CD8-positive, alpha-beta T cell (primary cell): ENCODE measurements at regions of chr12 and their contacts with region 1.

Region 1: DNA sequence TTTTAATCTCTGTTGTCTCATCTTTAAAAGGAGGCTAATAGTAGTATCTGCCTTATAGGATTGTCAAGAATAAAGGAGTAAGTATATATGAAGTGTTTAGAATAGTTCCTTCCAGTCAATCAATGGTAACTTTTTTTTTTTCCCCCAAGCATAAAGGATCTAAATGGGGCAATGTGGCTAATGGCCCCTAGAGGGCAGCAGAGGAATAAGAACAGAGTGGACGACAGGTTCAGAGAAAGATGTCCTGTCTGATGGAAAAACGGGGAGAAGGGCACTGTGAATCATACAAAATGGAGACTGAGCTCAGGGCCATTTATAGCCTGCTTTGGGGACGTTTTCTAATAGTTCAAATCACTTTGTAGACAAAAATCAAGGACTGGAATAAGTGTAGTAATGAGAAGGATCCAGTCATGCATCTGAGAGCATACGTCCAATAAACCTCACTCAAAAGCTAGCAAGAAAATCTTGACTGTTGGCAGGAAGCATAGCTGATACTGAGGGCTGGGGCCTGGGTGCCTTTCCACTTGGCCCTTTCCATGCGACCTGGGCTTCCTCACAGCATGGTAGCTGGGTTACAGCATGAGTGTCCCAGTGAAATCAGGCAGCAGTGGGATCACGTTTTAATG is 51.3 kb downstream of the IFNG-AS1 start:
- DNase-seq: peak; percentile 15 to 85 (median 65)
- ATAC-seq: peak; percentile 79
- H3K4me3 ChIP-seq: no peak overlapping the region
- H3K4me3 Mint-ChIP-seq: no peak overlapping the region
- H3K27ac ChIP-seq: no peak overlapping the region
- H3K27ac Mint-ChIP-seq: no peak overlapping the region
- H3K4me1 ChIP-seq: no peaks in the 10 kb centered on the region
- H3K4me1 Mint-ChIP-seq: peaks cover 25% of the 10 kb centered on the region
- H3K27me3 ChIP-seq: no peaks in the 10 kb centered on the region
- H3K27me3 Mint-ChIP-seq: no peaks in the 10 kb centered on the region
- CTCF ChIP-seq: peak; percentile 89

Region 2: DNA sequence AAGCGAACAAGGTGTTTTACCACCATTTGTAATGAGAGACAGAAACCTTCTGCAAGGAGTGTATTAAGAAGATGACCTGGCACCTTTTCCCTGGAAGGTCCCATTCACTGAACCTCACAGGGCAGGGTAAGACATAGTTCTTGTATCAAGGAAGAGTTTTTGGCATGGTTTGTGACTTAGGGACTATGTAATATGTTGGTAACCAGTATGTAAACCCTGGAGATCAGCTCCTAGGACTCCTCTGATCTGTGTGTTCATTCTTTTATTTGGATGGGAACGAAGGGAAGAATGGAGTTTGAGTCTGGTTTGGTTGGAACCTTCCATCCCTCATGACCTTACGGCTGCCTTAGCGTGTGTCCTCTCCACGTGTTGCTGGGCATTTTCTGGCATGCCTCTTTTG is 596.0 kb before region 1 on chr12:
- CTCF ChIA-PET with region 1: no interaction called
- POLR2A ChIA-PET with region 1: no interaction called
- intact Hi-C with region 1: no loop called
- DNase-seq: no peak
- ATAC-seq: no peak
- H3K4me3 ChIP-seq: no peak overlapping the region
- H3K4me3 Mint-ChIP-seq: no peak overlapping the region
- H3K27ac ChIP-seq: no peak overlapping the region
- H3K27ac Mint-ChIP-seq: no peak overlapping the region
- H3K4me1 ChIP-seq: peaks cover 21% of the 10 kb centered on the region
- H3K4me1 Mint-ChIP-seq: peaks cover 37% of the 10 kb centered on the region
- H3K27me3 ChIP-seq: no peaks in the 10 kb centered on the region
- H3K27me3 Mint-ChIP-seq: no peaks in the 10 kb centered on the region
- CTCF ChIP-seq: no peak

Region 3: DNA sequence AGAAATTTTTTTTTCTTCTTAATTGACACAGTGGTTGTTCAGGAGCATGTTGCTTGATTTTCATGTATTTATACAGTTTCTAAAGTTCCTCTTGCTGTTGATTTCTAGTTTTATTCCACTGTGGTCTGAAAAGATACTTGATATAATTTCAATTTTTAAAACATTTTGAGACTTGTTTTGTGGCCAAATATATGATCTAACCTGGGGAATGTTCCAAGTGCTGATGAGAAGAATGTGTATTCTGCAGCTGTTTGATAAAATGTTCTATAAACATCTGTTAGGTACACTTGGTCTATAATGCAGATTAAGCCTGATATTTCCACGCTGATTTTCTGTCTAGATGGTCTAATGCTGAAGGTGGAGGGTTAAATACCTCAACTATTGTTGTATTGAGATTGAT is 202.7 kb before region 1 on chr12:
- CTCF ChIA-PET with region 1: no interaction called
- POLR2A ChIA-PET with region 1: no interaction called
- intact Hi-C with region 1: no loop called
- DNase-seq: no peak
- ATAC-seq: no peak
- H3K4me3 ChIP-seq: no peak overlapping the region
- H3K4me3 Mint-ChIP-seq: no peak overlapping the region
- H3K27ac ChIP-seq: no peak overlapping the region
- H3K27ac Mint-ChIP-seq: no peak overlapping the region
- H3K4me1 ChIP-seq: no peaks in the 10 kb centered on the region
- H3K4me1 Mint-ChIP-seq: no peaks in the 10 kb centered on the region
- H3K27me3 ChIP-seq: no peaks in the 10 kb centered on the region
- H3K27me3 Mint-ChIP-seq: no peaks in the 10 kb centered on the region
- CTCF ChIP-seq: no peak

Region 4: DNA sequence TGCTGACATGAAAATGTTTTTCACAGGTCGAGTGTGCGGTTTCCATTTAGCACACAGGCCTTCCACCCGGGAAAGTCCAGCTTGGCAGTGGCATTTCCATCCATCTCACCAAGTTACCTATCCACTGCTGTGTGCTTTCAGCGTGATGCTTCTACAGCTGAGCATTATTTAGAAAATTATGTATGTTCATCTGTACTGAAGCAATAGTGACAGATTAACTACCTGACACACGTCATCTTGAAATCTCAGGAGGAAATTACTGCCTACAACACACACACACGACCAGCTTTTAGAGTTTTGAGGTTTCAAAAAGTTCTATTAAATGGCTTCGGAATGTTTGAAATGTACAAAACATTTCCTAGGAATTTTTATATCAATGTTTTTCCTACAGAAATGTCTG is 11.9 kb before region 1 on chr12:
- CTCF ChIA-PET with region 1: interaction called, 14 read pairs
- POLR2A ChIA-PET with region 1: interaction called, 5 read pairs
- intact Hi-C with region 1: no loop called
- DNase-seq: peak in 2 of 9 experiments; percentile 28 to 47
- ATAC-seq: no peak
- H3K4me3 ChIP-seq: no peak overlapping the region
- H3K4me3 Mint-ChIP-seq: no peak overlapping the region
- H3K27ac ChIP-seq: no peak overlapping the region
- H3K27ac Mint-ChIP-seq: no peak overlapping the region
- H3K4me1 ChIP-seq: peaks cover 13% of the 10 kb centered on the region
- H3K4me1 Mint-ChIP-seq: peaks cover 22% of the 10 kb centered on the region
- H3K27me3 ChIP-seq: no peaks in the 10 kb centered on the region
- H3K27me3 Mint-ChIP-seq: no peaks in the 10 kb centered on the region
- CTCF ChIP-seq: no peak

Region 5: DNA sequence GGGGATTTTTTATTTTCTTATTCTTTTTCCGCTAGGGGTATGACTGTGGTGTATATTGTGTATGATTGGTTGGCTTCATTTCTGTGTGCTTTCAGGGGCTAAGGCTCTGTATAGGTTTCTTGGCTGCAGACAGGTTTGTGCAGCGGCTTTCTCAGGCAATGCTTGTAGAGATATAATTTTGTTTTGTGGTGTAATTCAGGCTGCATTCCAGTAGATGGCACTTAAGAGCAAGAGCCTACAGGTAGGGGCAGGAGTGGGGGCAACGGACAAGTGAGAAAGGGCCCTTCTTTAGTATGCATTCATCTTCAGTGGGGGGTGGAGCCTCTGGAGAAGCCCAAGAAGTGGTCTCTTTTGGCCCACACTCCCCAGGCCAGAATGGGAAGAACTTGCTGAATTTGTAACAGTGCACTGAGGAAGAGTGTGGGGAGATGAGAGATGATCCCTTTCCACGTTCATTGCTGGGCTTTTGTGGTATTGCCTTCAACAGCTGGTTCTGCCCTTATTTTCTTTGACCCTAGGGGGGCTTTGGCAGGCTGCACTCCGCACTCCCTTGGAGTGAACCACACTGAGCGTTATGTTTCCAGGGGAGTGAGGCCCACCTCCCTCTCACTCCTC is 27.3 kb after region 1 on chr12:
- CTCF ChIA-PET with region 1: interaction called, 12 read pairs
- POLR2A ChIA-PET with region 1: no interaction called
- intact Hi-C with region 1: no loop called
- DNase-seq: peak in 2 of 9 experiments; percentile 10 to 20
- ATAC-seq: no peak
- H3K4me3 ChIP-seq: no peak overlapping the region
- H3K4me3 Mint-ChIP-seq: no peak overlapping the region
- H3K27ac ChIP-seq: no peak overlapping the region
- H3K27ac Mint-ChIP-seq: no peak overlapping the region
- H3K4me1 ChIP-seq: no peaks in the 10 kb centered on the region
- H3K4me1 Mint-ChIP-seq: peaks cover 11% of the 10 kb centered on the region
- H3K27me3 ChIP-seq: no peaks in the 10 kb centered on the region
- H3K27me3 Mint-ChIP-seq: no peaks in the 10 kb centered on the region
- CTCF ChIP-seq: no peak

Region 6: GRCh38 chr12:68119724-68120211 is 79.2 kb after region 1 on chr12:
- CTCF ChIA-PET with region 1: interaction called, 10 read pairs
- POLR2A ChIA-PET with region 1: no interaction called
- intact Hi-C with region 1: no loop called
- DNase-seq: peak in 6 of 9 experiments; percentile 31 to 77 (median 62)
- ATAC-seq: peak; percentile 77
- H3K4me3 ChIP-seq: peak overlapping the region in 1 of 2 experiments; percentile 1
- H3K4me3 Mint-ChIP-seq: no peak overlapping the region
- H3K27ac ChIP-seq: peak overlapping the region in 1 of 2 experiments; percentile 73
- H3K27ac Mint-ChIP-seq: peak overlapping the region; percentile 69
- H3K4me1 ChIP-seq: peaks cover 12% of the 10 kb centered on the region
- H3K4me1 Mint-ChIP-seq: peaks cover 34% of the 10 kb centered on the region
- H3K27me3 ChIP-seq: no peaks in the 10 kb centered on the region
- H3K27me3 Mint-ChIP-seq: no peaks in the 10 kb centered on the region
- CTCF ChIP-seq: no peak

Region 7: DNA sequence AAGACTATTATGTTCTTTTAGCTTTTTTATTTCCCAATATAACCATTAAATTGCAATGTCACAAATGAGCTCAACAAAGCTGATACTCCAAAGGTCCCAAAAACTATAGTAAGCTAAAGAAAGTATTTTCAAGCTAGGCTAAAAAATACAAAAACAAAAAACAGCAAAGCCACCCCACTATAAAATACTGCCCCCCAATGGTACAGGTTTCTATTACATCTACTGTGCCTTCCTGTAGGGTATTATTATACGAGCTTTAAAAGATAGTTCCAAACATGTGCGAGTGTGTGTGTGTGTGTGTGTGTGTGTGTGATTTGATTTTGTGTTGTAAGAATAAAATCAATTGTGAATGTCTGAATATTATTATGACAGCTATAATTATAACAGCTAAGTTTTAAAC is 117.9 kb after region 1 on chr12:
- CTCF ChIA-PET with region 1: interaction called, 30 read pairs
- POLR2A ChIA-PET with region 1: no interaction called
- intact Hi-C with region 1: loop called (anchors 1 kb)
- DNase-seq: peak in 4 of 9 experiments; percentile 21 to 79 (median 49)
- ATAC-seq: peak; percentile 62
- H3K4me3 ChIP-seq: peak overlapping the region in 1 of 2 experiments; percentile 57
- H3K4me3 Mint-ChIP-seq: peak overlapping the region; percentile 33
- H3K27ac ChIP-seq: peak overlapping the region in 1 of 2 experiments; percentile 80
- H3K27ac Mint-ChIP-seq: no peak overlapping the region
- H3K4me1 ChIP-seq: peaks cover 5% of the 10 kb centered on the region
- H3K4me1 Mint-ChIP-seq: peaks cover 51% of the 10 kb centered on the region
- H3K27me3 ChIP-seq: no peaks in the 10 kb centered on the region
- H3K27me3 Mint-ChIP-seq: no peaks in the 10 kb centered on the region
- CTCF ChIP-seq: peak; percentile 61

Region 8: DNA sequence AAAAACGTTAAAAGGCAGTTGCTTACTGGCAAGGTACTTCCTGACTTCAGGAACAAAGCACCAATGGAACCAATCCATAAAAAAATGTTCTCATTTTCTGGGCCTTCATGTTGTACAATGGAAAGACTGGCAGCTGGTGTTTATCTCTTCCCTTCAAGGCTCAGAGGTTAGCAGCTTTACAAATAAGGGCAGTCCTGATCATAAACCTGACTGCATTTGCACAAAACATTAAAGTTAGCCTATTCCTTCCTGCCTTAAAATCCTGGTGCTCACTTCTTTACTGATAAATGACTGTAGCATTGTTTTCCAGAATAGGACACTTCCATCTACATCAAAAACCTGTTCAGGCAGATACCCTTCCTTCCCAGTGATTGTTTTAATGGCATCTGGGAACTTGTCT is 165.9 kb after region 1 on chr12:
- CTCF ChIA-PET with region 1: no interaction called
- POLR2A ChIA-PET with region 1: no interaction called
- intact Hi-C with region 1: no loop called
- DNase-seq: no peak
- ATAC-seq: no peak
- H3K4me3 ChIP-seq: no peak overlapping the region
- H3K4me3 Mint-ChIP-seq: no peak overlapping the region
- H3K27ac ChIP-seq: no peak overlapping the region
- H3K27ac Mint-ChIP-seq: no peak overlapping the region
- H3K4me1 ChIP-seq: peaks cover 9% of the 10 kb centered on the region
- H3K4me1 Mint-ChIP-seq: peaks cover 22% of the 10 kb centered on the region
- H3K27me3 ChIP-seq: no peaks in the 10 kb centered on the region
- H3K27me3 Mint-ChIP-seq: no peaks in the 10 kb centered on the region
- CTCF ChIP-seq: no peak

Region 9: DNA sequence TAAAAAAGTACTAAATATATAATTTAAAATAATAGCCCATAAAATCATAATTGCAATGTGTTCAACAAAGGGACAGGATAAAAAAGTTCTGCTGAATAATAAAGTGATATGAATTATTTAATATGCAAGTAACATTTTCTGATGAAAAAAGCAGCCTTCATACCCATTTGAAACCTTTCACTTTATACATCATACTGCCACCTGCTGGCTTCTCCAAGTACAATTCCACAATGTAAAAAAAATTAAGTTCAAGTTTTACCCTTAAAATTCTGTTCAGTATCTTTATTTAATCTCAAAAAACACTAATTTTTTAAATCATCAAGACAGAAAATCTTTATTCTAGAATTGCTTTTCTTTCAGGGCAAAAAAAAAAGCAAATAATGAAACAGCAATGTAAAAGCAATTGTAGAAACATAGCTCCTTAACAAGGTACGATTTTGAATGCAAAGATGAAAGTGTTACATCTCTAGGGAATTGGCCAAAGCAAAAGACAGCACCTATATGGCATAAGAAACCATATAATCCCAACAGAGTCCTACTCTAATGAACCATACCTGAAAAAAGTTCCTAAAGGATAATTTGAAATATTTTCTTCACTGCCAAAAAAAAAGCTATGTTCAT is 276.6 kb after region 1 on chr12:
- CTCF ChIA-PET with region 1: interaction called, 66 read pairs
- POLR2A ChIA-PET with region 1: interaction called, 3 read pairs
- intact Hi-C with region 1: loop called (anchors 1 kb)
- DNase-seq: peak in 8 of 9 experiments; percentile 21 to 75 (median 48)
- ATAC-seq: peak; percentile 36
- H3K4me3 ChIP-seq: no peak overlapping the region
- H3K4me3 Mint-ChIP-seq: no peak overlapping the region
- H3K27ac ChIP-seq: no peak overlapping the region
- H3K27ac Mint-ChIP-seq: no peak overlapping the region
- H3K4me1 ChIP-seq: no peaks in the 10 kb centered on the region
- H3K4me1 Mint-ChIP-seq: no peaks in the 10 kb centered on the region
- H3K27me3 ChIP-seq: no peaks in the 10 kb centered on the region
- H3K27me3 Mint-ChIP-seq: no peaks in the 10 kb centered on the region
- CTCF ChIP-seq: peak; percentile 86